Dorsolateral prefrontal cortex (tissue), 120 donors: ENCODE measurements at regions of chr16 and their contacts with region 1.

Region 1: DNA sequence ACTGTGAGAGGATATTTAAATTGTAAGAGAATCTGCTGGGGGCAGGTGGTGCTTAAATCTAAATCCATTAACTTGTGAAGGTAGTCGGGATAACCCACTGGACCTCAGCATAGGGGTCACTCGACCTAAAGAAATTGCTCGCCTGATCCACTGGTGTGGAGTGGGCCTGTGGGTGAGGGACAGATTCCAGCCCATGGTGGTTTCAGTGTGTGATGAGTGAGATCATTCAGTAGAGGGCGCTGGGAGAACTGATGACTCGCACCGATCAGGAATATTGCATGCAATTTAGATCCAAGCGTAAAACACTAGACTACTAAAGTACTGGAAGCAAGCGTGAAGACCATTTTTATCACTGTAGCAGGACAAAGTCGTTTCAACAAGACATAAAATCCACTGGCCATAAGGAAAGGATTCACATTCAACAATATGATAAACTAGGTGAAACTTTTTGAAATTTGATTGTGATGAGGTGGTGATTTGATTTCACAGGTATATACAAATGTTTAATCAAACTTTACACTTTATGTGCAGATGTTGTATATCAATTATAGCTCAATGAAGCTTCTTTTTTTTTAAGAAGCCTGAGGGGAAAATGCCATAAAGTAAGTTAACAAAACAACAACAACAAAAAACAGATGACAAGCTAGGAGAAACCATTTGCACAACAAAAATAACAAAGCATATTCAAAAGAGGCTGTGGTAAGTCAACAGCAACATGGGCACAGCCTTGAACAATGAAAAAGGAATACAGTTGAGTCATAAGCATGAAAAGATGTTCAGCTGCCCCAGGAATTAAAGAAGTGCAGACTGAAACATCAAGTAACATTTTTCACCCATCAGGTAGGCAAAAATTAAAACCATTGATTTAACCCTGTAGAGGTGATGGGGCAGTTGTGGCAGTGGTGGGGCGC is 7.5 kb upstream of the TMEM170A start:
- DNase-seq: peak; percentile 33 to 81 (median 70)
- H3K4me3 ChIP-seq: no peak overlapping the region
- H3K27ac ChIP-seq: peak overlapping the region in 14 of 59 donors; percentile 0 to 73 (median 42)
- H3K27me3 ChIP-seq: no peaks in the 10 kb centered on the region
- CTCF ChIP-seq: peak; percentile 53 to 94 (median 83)

Region 2: GRCh38 chr16:75550211-75550662 is 78.3 kb after region 1 on chr16:
- intact Hi-C with region 1: loop called (anchors 1 to 2 kb)
- DNase-seq: peak in 6 of 10 donors; percentile 40 to 74 (median 52)
- H3K4me3 ChIP-seq: peak overlapping the region in 16 of 59 donors; percentile 2 to 40 (median 14)
- H3K27ac ChIP-seq: peak overlapping the region in 55 of 59 donors; percentile 2 to 85 (median 71)
- H3K27me3 ChIP-seq: no peaks in the 10 kb centered on the region
- CTCF ChIP-seq: peak; percentile 35 to 77 (median 65)

Region 3: GRCh38 chr16:75566040-75566810 is 94.2 kb after region 1 on chr16 and contains the start of gene GABARAPL2:
- intact Hi-C with region 1: no loop called
- DNase-seq: peak; percentile 75 to 94 (median 84)
- H3K4me3 ChIP-seq: peak within 1 kb of the TSS; percentile 58 to 100 (median 97)
- H3K27ac ChIP-seq: peak within 1 kb of the TSS in 52 of 59 donors; percentile 19 to 91 (median 78)
- H3K27me3 ChIP-seq: no peaks in the 10 kb centered on the region
- CTCF ChIP-seq: peak in 10 of 56 donors; percentile 5 to 27 (median 19)
- total RNA-seq, gene GABARAPL2: 171 to 307 (median 259) TPM

Region 4: GRCh38 chr16:75614066-75614897 is 142.3 kb after region 1 on chr16:
- intact Hi-C with region 1: no loop called
- DNase-seq: no peak
- H3K4me3 ChIP-seq: no peak overlapping the region
- H3K27ac ChIP-seq: no peak overlapping the region
- H3K27me3 ChIP-seq: no peaks in the 10 kb centered on the region
- CTCF ChIP-seq: no peak